Activated naive CD4-positive, alpha-beta T cell treated with anti-CD3 and anti-CD28 coated beads for 36 hours (primary cell): ENCODE measurements at regions of chrX and their contacts with region 1.

Region 1: GRCh38 chrX:69093960-69094871 is 71.0 kb downstream of the PJA1 start:
- DNase-seq: peak; percentile 45
- H3K4me3 Mint-ChIP-seq: no peak overlapping the region
- H3K27ac Mint-ChIP-seq: no peak overlapping the region
- H3K4me1 Mint-ChIP-seq: no peaks in the 10 kb centered on the region
- H3K27me3 Mint-ChIP-seq: no peaks in the 10 kb centered on the region

Region 2: DNA sequence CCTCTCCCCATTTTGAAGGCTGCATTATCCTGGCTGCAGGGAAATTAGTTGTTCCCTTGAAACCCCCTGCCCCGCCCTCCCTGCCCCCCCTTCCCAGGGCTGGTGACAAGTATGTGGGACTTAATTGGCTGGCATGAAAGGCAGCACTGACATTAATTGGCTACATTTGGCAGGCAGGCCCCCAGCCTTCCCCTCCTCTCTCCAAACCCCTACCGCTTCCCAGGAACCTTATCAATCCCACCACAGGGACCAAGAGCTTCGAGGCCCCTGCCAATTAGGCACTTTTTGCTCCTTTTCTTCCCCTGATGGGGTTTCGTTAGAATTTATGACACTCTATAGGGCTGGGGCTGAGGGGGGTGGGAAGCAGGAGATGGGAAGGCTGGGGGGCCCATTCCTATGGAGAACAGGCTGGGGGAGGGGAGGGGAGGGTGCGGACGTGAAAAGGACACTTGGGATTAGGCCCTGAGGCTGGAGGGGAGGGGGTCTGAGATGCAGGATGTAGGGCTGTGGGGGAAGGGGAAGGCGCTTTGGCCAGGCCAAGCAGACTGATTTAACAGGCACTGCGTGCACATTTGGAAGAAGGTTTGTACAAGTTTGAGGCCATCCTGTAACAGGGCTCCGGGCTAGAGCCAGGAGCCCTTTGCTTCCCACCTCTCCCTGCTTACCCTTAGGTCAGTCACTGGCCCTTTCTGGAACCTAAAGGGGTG is 213.2 kb before region 1 on chrX:
- CTCF ChIA-PET with region 1: no interaction called
- intact Hi-C with region 1: no loop called
- DNase-seq: no peak
- H3K4me3 Mint-ChIP-seq: no peak overlapping the region
- H3K27ac Mint-ChIP-seq: no peak overlapping the region
- H3K4me1 Mint-ChIP-seq: no peaks in the 10 kb centered on the region
- H3K27me3 Mint-ChIP-seq: no peaks in the 10 kb centered on the region

Region 3: DNA sequence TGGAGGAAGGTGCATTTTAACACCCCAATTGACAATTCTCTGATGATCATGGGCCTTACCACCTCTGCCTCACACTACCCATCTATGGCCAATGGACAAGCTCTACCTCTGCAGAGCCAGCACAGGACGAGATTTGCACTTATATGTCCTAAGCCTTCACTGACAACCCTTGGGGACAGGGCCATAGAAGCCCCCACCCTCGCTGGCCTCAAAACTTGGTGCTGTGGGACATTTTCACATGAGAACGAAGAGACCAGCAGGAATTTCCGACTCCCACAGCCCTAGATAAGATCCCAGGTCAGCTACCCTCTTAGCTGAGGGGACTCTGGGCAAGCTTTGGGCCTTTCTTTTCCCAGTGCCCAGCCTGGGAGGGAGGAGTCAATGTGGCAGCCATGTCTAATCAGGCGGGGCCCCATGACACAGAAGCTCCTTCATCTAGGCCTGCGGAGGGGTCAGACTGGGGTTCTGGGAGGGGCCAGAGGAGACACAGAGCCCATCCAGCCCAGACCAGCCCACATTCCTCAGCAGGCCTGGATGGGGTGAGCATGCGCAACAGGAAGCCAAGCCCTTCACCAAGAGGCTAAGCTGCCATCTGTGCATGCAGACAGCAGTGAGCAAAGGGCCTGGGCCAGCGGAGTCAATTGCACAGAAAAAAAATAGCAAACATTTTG is 59.0 kb after region 1 on chrX:
- CTCF ChIA-PET with region 1: no interaction called
- intact Hi-C with region 1: no loop called
- DNase-seq: no peak
- H3K4me3 Mint-ChIP-seq: no peak overlapping the region
- H3K27ac Mint-ChIP-seq: no peak overlapping the region
- H3K4me1 Mint-ChIP-seq: no peaks in the 10 kb centered on the region
- H3K27me3 Mint-ChIP-seq: peaks cover 2% of the 10 kb centered on the region

Region 4: DNA sequence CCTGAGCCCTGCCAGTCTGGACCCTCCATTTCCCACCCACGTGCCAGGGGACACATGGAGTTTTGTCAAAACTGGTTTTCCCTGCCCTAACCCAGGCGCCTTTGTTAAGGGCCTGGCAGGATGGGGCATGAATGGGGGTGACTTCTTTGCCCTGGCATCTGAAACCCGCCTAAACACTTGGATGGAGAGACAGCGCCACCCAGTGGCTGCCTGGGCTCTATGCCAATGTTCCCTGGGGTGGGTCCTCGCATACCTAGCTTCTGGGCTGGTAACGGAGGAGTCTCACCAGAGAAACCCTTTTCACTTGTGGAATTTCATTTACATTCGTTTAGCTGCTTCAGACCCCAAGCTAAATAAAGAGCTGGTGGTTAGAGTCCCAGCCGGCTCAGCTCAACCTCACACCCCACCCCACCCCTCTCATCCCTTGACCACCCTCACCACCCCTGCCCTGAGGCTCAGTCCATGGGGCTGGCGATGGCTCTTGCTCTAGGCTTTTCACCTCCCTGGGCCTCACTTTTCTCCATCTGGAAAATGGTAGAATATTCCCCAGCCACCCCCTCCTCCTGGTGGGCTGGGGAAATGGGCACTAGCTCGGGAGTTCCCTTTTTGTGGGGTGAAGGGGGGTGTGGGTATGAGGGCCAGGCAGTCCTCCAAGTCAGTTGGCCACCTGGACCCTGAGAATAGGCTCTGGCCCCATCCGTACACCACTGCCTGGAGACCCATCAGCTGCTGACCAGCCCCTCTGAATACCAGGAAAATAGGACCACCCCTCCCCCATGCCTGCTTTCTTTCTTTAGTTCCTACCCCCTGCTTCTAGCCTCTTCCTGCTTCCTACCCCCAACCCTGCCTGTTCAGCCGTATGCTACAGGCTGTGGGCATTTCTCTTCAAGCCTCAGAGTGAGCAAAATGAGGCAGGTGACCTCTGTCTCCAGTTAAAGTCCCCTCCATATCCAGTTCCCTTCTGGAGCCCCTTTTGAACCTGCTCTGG is 128.2 kb after region 1 on chrX:
- CTCF ChIA-PET with region 1: interaction called, 9 read pairs
- intact Hi-C with region 1: loop called (anchors 1 kb)
- DNase-seq: peak; percentile 80
- H3K4me3 Mint-ChIP-seq: no peak overlapping the region
- H3K27ac Mint-ChIP-seq: no peak overlapping the region
- H3K4me1 Mint-ChIP-seq: no peaks in the 10 kb centered on the region
- H3K27me3 Mint-ChIP-seq: no peaks in the 10 kb centered on the region

Region 5: DNA sequence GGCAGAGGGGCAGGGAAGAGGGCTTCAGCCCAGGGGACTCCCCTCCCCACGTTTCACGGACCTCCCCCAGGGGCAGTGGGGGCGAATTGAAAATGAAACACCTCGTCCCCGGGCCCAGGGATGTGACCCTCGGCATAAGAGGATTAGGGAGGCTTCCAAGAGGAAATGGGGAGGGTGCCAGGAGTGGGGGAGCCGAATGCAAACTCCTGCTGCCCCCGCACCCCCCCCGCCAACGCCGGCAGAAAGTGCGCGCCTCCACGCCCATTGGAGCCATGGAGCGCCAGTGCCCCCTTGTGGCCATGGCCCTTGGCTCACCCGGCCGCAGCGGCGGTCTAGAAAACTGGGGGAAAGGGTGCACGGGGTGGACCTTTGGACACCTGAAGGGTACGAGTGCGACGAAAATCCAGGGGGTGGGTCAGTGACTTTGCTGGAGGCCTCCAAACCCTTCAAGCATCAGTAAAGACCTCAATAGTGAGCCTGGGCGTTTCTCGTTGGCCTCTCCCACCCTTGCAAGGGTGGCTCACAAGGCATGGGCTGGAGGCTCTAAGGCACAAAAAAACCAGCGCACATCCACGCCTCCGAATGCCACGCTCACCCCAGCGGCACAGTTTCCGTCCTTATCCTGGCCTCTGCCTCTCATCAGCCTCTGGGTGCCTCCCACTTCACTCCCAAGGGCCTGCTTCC is 191.8 kb after region 1 on chrX:
- CTCF ChIA-PET with region 1: no interaction called
- intact Hi-C with region 1: loop called (anchors 1 kb)
- DNase-seq: peak; percentile 60
- H3K4me3 Mint-ChIP-seq: no peak overlapping the region
- H3K27ac Mint-ChIP-seq: no peak overlapping the region
- H3K4me1 Mint-ChIP-seq: no peaks in the 10 kb centered on the region
- H3K27me3 Mint-ChIP-seq: no peaks in the 10 kb centered on the region

Region 6: DNA sequence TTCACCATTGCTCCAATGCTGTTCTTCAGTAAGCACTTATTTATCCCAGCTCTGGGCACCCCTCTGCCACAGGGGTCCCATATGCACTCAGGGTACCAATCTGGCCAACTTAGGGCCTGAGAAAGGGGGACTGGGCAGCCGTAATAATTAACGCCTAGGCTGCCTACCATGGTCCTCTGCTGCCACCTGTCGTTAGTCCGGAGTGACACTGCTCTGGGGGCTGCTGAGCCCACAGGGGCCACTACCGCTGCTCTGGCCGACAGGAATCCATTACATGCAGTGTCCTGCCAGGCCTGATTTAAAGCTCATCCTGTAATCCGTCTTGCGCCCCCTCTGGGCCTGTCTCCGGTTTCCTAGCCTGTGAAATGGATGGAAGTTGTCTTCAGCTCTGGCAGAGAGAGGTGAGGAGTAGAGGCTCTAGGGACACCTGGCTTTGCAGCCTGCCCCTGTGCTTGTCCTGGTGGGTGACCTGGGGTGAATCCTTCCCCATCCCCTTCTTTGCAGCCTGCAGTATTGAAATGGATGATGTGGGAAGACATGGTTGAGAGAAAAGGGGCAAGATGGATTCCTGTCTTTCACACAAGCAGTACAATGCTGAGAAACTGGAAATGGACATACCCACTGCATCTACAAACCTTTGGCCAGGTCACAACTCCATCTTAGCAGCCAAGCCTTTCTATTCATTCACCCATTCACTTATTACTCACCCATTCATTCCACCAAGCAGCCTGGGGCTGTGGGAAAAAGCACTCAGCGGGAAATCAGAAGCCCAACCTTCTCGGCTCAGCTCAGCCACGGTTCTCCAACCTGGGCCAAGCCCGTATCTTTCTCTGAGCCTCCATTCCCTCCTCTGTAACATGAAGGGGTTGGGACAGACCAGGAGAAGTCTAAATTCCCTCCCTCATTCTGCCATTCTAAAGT is 293.6 kb after region 1 on chrX:
- CTCF ChIA-PET with region 1: no interaction called
- intact Hi-C with region 1: loop called (anchors 2 kb)
- DNase-seq: peak; percentile 39
- H3K4me3 Mint-ChIP-seq: no peak overlapping the region
- H3K27ac Mint-ChIP-seq: no peak overlapping the region
- H3K4me1 Mint-ChIP-seq: no peaks in the 10 kb centered on the region
- H3K27me3 Mint-ChIP-seq: no peaks in the 10 kb centered on the region